ENCODE measurements at regions of chr3 and their contacts with region 1.

Region 1: DNA sequence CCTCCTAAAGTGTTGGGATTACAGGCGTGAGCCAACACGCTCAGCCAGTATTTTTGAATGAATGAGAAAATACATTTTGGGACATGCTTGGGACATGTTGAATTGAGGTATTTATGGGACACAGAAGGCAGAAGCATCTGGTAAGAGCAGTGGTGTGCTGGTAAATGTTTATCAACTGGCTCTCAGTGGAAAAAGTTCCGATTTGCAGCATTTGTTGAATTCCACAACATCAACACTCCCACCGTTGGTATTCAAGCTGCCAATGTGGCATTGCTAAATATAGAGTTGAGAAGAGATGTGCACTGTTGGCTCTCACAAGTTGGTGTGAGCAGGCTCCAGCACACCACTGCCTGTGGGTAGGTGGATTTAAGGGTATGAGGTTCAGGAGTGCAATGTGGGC is 35.8 kb upstream of the LRRFIP2 start:
- DNase-seq: no peak
- ATAC-seq: no peak

Region 2: DNA sequence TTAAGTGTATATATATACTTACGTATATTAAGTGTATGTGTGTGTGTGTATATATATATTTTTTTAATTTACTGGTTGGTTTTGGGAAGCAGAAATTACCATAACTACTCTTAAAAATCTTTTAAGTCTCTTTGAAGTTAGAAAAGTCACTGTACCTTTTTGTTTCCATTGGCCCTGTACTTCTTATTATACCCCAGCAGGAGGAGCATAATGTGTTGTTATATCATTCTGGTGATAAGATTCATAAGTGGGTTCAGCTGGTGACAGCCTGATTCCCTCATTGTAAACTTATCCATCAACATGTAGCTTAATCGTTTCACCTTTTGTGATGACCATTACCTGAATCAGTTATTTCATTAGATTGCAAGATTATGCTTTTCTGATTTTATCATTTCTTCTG is 186.1 kb before region 1 on chr3:
- intact Hi-C with region 1: loop called in 1 of 2 experiments (anchors 10 kb)
- DNase-seq: no peak
- ATAC-seq: peak; percentile 43

Region 3: GRCh38 chr3:37041546-37042195 is 168.6 kb before region 1 on chr3:
- intact Hi-C with region 1: no loop called
- DNase-seq: no peak
- ATAC-seq: peak; percentile 72

Measured in left colon (tissue), 2 donors.